Heart right ventricle (tissue), 16 donors: ENCODE measurements at regions of chr1 and their contacts with region 1.

Region 1: GRCh38 chr1:65059930-65060538 is 88.0 kb upstream of the AK4 start:
- DNase-seq: no peak
- ATAC-seq: peak in 3 of 8 donors; percentile 25 to 55 (median 34)
- H3K4me3 ChIP-seq: no peak overlapping the region
- H3K27ac ChIP-seq: peak overlapping the region in 4 of 10 donors; percentile 1 to 34 (median 4)
- H3K4me1 ChIP-seq: peaks cover 16 to 94% (median 76%) of the 10 kb centered on the region in 9 donors
- H3K27me3 ChIP-seq: no peaks in the 10 kb centered on the region
- CTCF ChIP-seq: peak; percentile 25 to 78 (median 67)

Region 2: DNA sequence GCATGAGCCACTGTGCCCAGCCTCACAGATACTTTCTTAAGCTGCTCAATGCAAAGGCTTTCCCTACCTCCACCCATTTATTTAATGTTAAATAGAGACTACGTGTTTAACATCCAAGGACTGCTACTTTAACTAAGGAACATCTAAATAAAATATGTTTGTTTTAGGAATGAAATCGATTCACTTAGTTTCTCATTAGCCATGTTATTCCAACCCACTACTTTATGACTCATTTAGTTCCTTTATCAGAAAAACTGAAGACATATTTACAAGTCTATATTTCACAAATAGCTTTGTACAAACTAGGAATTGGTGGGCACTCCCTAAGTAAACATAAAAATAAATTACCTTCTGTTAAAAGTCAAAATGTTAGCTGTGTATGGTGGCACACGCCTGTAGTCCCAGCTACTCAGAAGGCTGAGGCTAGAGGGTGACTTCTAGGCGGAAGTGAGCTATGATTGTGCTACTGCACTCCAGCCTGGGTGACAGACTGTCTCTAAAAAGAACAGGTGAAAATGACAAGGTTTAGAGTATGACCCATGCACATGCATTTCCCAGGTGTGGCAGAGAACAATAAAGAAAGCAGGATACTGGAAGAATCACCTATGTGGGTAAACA is 48.1 kb after region 1 on chr1:
- intact Hi-C with region 1: no loop called
- DNase-seq: no peak
- ATAC-seq: no peak
- H3K4me3 ChIP-seq: no peak overlapping the region
- H3K27ac ChIP-seq: no peak overlapping the region
- H3K4me1 ChIP-seq: peaks cover 0 to 15% (median 0%) of the 10 kb centered on the region in 9 donors
- H3K27me3 ChIP-seq: no peaks in the 10 kb centered on the region
- CTCF ChIP-seq: no peak

Region 3: GRCh38 chr1:65209005-65209885 is 149.2 kb after region 1 on chr1:
- intact Hi-C with region 1: loop called (anchors 2 to 5 kb)
- DNase-seq: peak in 1 of 2 donors; percentile 63
- ATAC-seq: peak; percentile 31 to 71 (median 60)
- H3K4me3 ChIP-seq: peak overlapping the region in 1 of 10 donors; percentile 11
- H3K27ac ChIP-seq: peak overlapping the region in 3 of 10 donors; percentile 17 to 51 (median 23)
- H3K4me1 ChIP-seq: peaks cover 0 to 31% (median 15%) of the 10 kb centered on the region in 9 donors
- H3K27me3 ChIP-seq: no peaks in the 10 kb centered on the region
- CTCF ChIP-seq: peak; percentile 36 to 82 (median 71)